Tibial artery (tissue), 4 donors: ENCODE measurements at regions of chr4 and their contacts with region 1.

Region 1: DNA sequence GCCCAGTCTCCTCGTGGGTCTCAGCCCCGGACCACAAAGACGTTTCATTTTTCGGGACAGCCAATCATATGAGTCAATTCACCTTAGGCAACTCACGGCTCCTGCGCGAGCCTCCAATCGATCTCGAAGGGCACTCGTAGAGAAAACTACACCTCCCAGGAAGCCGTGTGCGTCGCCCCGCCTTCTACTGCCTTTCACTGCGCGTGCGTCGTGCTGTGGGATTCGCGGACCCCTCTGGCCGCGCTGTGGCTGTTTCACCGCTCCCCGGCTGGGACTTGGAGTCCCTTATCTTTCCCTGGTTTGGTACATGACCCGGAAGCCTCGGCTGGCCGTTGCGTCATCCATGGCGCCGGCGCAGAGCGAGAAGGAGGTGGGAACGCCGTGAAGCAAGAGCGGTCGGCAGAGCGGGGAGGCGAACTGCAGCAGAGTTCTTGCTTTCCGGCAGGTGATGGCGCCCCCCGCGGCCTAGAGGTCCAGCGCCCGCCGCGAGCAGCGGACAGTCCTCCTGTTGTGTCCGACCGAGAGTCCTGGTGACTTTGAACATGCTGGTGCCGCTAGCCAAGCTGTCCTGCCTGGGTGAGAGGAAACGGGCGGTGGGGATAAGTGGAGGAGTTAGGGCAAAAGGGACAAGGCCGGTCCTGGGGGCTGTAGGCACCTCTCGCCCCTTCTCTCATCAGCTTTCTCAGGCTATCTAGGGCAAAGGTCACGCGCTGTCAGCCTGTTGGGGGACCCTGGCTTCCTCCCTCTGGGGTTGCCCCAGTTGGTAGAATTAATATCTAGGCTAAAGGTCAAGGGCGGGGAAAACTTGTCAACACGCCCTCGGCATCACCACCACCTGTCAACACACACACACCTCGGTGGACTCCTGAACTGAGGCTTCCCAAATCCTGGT is at the start of gene ETFDH:
- DNase-seq: peak; percentile 100
- H3K4me3 ChIP-seq: peak within 1 kb of the TSS; percentile 75 to 82
- H3K27ac ChIP-seq: peak within 1 kb of the TSS; percentile 94 to 96
- H3K4me1 ChIP-seq: peaks cover 0 to 20% (median 14%) of the 10 kb centered on the region in 4 donors
- H3K27me3 ChIP-seq: no peaks in the 10 kb centered on the region
- CTCF ChIP-seq: peak; percentile 56 to 66

Region 2: GRCh38 chr4:158538176-158538575 is 134.0 kb before region 1 on chr4:
- intact Hi-C with region 1: no loop called
- DNase-seq: no peak
- H3K4me3 ChIP-seq: no peak overlapping the region
- H3K27ac ChIP-seq: no peak overlapping the region
- H3K4me1 ChIP-seq: no peaks in the 10 kb centered on the region
- H3K27me3 ChIP-seq: no peaks in the 10 kb centered on the region
- CTCF ChIP-seq: no peak

Region 3: DNA sequence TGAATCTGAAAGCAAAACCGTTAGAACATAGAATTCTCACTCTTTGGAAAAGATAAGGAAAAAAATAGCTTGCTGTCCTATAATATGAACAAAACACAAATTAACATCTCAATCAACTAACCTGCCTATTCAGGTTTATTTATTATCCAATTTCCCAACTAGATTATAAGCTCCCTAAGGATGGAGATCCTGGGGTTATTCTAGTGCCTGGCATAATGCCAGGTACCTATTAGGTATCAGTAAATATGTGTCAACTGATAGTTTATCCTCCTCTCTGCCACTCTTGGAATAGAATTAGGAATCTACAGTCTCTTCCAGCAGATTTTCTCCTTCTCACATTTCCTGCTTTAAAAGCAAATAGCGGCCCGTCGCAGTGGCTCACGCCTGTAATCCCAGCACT is 19.6 kb after region 1 on chr4:
- intact Hi-C with region 1: no loop called
- DNase-seq: no peak
- H3K4me3 ChIP-seq: no peak overlapping the region
- H3K27ac ChIP-seq: no peak overlapping the region
- H3K4me1 ChIP-seq: no peaks in the 10 kb centered on the region
- H3K27me3 ChIP-seq: no peaks in the 10 kb centered on the region
- CTCF ChIP-seq: no peak

Region 4: DNA sequence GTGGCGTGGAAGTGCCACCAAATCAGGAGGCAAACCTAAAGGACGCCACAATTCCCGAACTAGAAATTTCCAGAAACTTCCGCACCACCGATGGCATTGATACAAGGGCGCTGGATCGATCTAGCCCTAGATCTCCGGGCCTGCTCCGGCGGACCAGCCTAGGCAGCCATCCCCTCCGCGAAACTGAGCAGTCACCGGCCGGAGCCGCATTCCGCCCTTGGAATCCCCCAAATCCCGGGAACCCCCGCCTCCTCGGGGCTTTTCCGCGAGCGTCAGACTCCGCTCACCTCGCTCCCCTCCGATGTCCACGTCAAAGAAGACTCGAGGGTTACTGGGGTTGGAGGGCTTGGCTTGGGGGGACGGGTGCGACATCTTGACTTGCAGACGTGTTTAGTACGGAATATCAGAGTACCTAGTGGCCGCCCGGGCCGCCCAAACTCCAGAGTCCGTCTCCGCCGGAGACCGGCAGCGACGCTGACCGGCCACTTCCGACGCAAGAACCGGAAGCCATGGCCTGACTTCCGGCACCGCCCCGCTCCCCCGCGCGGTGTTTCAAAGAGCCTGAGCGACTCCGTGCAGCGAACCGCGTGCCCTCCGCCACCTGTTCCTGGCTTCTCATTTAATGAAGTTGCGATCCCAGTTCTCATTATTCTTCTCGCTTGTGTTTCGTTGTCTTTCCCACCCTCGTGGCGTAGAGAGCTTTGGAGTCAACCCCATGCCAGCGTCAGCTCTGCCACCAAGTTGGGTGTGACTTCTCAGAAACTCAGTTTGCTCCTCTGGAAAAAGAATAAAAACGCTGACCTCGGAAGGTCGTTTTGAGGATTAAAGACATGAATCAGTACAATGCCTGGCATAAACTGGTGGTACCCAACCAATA is 51.0 kb after region 1 on chr4 and contains the start of gene PPID:
- intact Hi-C with region 1: loop called (anchors 2 kb)
- DNase-seq: peak; percentile 80 to 89
- H3K4me3 ChIP-seq: peak within 1 kb of the TSS; percentile 86
- H3K27ac ChIP-seq: peak within 1 kb of the TSS; percentile 90 to 93
- H3K4me1 ChIP-seq: peaks cover 0 to 18% (median 8%) of the 10 kb centered on the region in 4 donors
- H3K27me3 ChIP-seq: no peaks in the 10 kb centered on the region
- CTCF ChIP-seq: peak in 1 of 2 experiments; percentile 5

Region 5: DNA sequence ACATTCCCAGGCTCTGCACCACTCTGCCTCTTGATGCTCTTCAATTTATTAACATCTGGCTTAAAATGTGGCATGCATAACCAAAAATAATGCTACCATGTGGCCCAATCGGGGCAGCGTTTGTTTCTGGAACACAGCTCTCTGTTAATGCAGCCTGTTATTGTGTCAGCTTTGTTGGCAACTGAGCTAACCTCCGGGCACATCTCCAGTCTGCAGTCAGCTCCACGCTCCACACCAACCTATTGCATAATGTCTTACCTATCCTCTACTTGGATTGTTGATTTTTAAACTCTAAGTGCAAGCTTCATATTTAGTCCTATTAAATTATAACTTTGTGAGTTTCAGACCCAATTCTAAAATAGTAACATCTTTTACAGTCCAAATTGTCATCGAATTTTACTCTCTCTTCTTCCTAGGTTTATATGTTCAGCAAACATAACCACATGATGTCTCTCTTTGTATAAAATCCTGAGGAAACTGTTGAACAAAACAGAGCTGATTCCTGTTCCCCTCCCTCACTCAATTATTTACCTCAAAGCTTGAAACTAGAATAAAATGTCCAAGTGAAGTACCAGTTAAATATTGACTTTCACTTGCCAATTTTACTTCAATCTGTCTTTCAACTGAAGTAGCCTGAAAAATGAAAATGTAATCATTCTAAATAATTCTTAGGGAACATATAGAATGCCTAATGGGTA is 338.6 kb after region 1 on chr4:
- intact Hi-C with region 1: no loop called
- DNase-seq: peak; percentile 65 to 80
- H3K4me3 ChIP-seq: no peak overlapping the region
- H3K27ac ChIP-seq: no peak overlapping the region
- H3K4me1 ChIP-seq: peaks cover 0 to 10% (median 2%) of the 10 kb centered on the region in 4 donors
- H3K27me3 ChIP-seq: no peaks in the 10 kb centered on the region
- CTCF ChIP-seq: no peak